Naive thymus-derived CD4-positive, alpha-beta T cell (primary cell): ENCODE measurements at regions of chr17 and their contacts with region 1.

Region 1: DNA sequence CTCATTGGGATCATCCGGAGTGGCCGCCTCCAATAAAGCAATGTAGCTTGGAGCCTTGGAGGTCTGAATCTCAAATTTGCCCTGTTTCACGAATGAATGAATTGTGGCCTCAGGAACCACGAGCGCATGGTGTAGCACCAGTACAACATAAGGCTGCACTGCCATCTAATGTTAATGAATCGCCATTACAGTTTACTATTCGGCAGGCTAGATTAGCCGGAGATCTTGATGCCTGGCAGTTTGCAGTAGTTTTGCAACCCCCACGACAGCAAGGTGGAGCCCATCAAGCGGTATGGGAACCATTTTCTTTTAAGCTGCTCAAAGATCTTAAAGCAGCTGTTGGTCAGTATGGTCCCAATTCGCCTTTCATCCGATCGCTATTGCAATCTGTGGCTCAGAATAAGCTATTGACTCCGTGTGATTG is 18.8 kb downstream of the ALOX15B start:
- DNase-seq: peak in 7 of 9 donors; percentile 49 to 73 (median 64)
- ATAC-seq: peak; percentile 90
- H3K4me3 ChIP-seq: no peak overlapping the region
- H3K4me3 Mint-ChIP-seq: no peak overlapping the region
- H3K27ac ChIP-seq: no peak overlapping the region
- H3K27ac Mint-ChIP-seq: no peak overlapping the region
- H3K4me1 ChIP-seq: no peaks in the 10 kb centered on the region
- H3K4me1 Mint-ChIP-seq: peaks cover 0 to 20% (median 6%) of the 10 kb centered on the region in 7 donors
- H3K27me3 ChIP-seq: peaks cover 0 to 4% of the 10 kb centered on the region in 2 donors
- H3K27me3 Mint-ChIP-seq: peaks cover 34 to 62% (median 44%) of the 10 kb centered on the region in 5 donors

Region 2: DNA sequence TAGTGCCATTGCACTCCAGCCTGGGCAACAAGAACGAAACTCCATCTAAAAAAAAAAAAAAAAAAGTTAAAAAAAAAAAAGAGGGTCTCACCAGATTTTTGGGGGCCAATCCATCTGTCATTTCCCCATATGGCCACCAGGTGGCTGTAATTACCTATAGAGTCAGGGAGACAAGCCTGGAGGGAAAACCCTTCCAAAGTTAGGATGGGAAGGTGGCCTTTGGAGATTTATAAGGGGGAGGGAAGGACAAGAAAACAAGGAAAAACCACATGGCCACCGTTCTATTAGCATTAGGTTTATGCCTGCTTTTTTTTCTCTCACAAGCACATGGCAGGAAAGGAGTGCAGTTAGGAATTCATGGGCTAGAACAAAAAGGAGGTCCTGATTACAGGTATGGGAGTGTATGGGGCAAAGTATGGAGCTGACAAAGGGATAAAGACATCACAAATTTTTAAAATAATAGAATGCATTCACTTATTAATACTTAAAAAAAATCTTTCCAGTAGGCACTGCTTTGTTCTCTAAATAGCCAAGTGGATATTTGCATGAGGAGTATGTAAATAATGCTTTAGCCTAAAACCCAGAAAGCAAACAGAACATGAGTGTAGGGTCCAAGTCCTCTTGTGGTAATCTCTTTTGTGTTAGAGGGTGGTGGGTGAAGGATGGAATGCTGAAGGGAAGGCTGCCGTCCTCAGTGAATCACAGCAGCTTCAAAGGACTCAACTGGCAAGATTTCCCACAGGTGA is 194.8 kb before region 1 on chr17:
- CTCF ChIA-PET with region 1: interaction called, 4 read pairs
- POLR2A ChIA-PET with region 1: no interaction called
- intact Hi-C with region 1: loop called in 1 of 2 experiments (anchors 5 kb)
- DNase-seq: peak in 3 of 9 donors; percentile 48 to 53 (median 49)
- ATAC-seq: no peak
- H3K4me3 ChIP-seq: no peak overlapping the region
- H3K4me3 Mint-ChIP-seq: no peak overlapping the region
- H3K27ac ChIP-seq: no peak overlapping the region
- H3K27ac Mint-ChIP-seq: peak overlapping the region in 1 of 9 donors; percentile 60
- H3K4me1 ChIP-seq: peaks cover 17 to 19% of the 10 kb centered on the region in 2 donors
- H3K4me1 Mint-ChIP-seq: peaks cover 16 to 32% (median 27%) of the 10 kb centered on the region in 7 donors
- H3K27me3 ChIP-seq: no peaks in the 10 kb centered on the region
- H3K27me3 Mint-ChIP-seq: no peaks in the 10 kb centered on the region

Region 3: DNA sequence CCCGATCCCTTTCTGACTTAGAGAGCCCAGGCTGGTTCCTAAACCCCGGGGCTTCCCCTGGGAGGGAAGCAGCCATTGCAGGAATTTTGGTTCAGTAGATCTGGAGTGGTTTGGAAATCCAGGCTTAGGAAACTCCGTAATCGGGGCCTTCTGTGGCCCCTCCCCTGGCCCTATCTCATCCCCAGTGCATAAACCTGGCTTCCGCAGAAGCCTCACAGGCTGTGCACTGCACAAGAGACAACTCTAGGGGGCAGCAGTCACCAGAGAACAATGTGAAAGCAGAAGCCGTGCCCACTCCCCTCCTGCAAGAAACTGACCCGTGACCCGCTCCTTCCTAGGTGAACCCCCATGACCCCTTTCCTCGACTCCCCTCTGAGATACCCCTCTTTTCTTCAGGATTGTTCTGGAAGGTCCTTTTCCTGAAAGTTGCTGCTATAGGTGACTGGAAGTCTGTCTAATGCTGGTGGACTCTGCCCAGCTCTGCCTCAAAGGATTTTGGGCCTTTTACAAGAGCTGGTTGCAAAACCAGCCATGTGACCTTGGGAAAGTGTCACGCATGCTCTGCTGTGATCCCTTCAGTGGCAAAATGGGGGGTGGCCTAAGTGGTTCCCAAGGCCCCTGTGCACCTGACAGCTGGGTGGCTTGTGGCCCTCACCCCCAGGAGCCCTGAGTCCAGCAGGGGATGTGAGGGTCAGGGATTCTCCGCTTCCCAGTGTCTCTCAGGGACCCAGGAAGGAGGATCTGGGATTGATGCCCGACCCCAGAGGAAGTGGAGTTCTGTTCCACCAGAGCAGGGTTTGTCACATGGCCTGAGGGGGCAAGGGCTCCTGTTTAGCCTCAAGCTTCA is 40.8 kb before region 1 on chr17:
- CTCF ChIA-PET with region 1: no interaction called
- POLR2A ChIA-PET with region 1: no interaction called
- intact Hi-C with region 1: loop called in 1 of 2 experiments (anchors 2 kb)
- DNase-seq: peak in 8 of 9 donors; percentile 19 to 56 (median 43)
- ATAC-seq: peak; percentile 88
- H3K4me3 ChIP-seq: peak overlapping the region; percentile 59
- H3K4me3 Mint-ChIP-seq: peak overlapping the region; percentile 74 to 88 (median 82)
- H3K27ac ChIP-seq: no peak overlapping the region
- H3K27ac Mint-ChIP-seq: peak overlapping the region in 2 of 9 donors; percentile 28 to 41
- H3K4me1 ChIP-seq: peaks cover 0 to 3% of the 10 kb centered on the region in 2 donors
- H3K4me1 Mint-ChIP-seq: peaks cover 0 to 21% (median 7%) of the 10 kb centered on the region in 7 donors
- H3K27me3 ChIP-seq: no peaks in the 10 kb centered on the region
- H3K27me3 Mint-ChIP-seq: peaks cover 0 to 38% (median 4%) of the 10 kb centered on the region in 5 donors

Region 4: DNA sequence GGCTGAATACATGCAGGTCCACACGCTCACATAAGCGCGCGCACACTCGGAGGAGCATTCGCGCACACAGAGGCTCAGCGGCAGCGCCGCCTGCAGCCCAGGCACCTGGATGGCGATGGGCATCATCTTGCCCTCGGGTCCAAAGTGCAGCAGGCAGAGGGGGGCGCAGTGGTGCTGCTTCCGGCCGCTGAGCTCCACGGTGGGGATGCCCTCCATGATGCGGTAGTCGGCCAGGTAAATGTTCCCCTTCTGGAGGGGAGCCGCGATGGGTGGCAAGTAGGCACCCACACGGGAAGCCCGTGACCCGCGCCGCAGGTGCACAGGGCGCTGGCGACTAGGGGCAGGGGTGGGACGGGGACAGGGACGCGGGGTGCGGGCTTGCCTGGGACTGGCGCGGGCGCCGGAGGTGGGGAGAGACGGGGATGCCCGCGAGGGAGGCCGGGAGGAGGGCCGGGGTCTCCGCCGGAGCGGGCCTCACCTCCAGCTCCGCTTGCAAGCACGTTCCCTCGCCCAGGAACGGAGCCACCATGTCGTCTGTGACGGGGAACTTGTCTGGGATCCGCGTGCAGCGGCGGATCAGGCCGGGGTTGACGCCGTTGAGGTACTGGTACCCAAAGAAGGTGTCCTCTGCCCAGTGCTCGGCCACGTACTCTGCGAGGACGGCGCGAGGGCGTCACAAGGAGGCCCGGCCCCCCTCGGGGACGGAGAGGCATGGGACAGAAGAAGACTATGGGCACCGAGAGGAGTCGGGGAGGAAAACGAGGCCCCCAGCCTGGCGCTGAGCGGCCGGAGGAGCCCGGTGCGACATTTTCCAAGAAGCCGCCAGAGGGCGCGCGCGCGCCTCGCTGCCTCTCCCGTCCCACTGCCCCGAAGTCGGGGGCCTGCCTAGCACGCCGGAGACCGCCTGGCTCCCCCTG is 21.8 kb after region 1 on chr17:
- CTCF ChIA-PET with region 1: interaction called, 122 read pairs
- POLR2A ChIA-PET with region 1: interaction called, 4 read pairs
- intact Hi-C with region 1: loop called in 1 of 2 experiments (anchors 1 kb)
- DNase-seq: peak; percentile 63 to 89 (median 79)
- ATAC-seq: peak; percentile 90
- H3K4me3 ChIP-seq: peak overlapping the region; percentile 62
- H3K4me3 Mint-ChIP-seq: peak overlapping the region; percentile 88 to 93 (median 91)
- H3K27ac ChIP-seq: peak overlapping the region; percentile 62
- H3K27ac Mint-ChIP-seq: peak overlapping the region; percentile 42 to 92 (median 79)
- H3K4me1 ChIP-seq: peaks cover 13 to 14% of the 10 kb centered on the region in 2 donors
- H3K4me1 Mint-ChIP-seq: peaks cover 10 to 21% (median 18%) of the 10 kb centered on the region in 7 donors
- H3K27me3 ChIP-seq: peaks cover 0 to 4% of the 10 kb centered on the region in 2 donors
- H3K27me3 Mint-ChIP-seq: peaks cover 7 to 18% (median 9%) of the 10 kb centered on the region in 5 donors

Region 5: DNA sequence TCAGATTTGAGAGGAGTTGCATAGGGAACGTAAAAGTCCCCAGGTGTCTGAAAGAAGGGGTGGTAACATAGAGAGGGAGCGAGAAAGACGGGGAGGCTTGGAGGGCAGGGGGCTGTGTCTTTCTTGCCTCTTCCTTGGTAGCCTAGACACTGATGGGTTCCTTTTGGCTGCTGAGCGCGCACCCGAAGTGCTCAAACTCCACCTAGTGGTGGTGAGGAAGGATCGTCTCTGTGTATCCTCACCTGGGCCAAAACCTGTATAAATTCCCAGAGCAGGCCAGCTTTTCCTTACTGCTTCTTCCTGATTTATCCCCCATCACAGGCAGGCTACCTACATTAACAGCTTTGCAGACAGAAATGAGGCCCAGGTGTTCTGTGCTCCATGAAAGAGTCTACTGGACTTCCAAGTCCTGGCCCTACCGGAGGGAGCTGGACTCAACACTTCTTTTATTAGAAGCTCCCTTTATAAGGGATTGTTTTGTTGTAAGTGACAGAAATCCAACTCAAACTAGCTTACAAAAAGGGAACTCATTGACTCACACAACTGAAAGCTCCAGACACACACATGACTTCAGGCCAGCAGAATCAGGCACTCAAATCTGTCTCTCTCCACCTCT is 243.0 kb after region 1 on chr17:
- CTCF ChIA-PET with region 1: interaction called, 18 read pairs
- POLR2A ChIA-PET with region 1: no interaction called
- intact Hi-C with region 1: loop called in 1 of 2 experiments (anchors 1 kb)
- DNase-seq: peak; percentile 33 to 80 (median 72)
- ATAC-seq: peak; percentile 95
- H3K4me3 ChIP-seq: no peak overlapping the region
- H3K4me3 Mint-ChIP-seq: peak overlapping the region in 1 of 10 donors; percentile 14
- H3K27ac ChIP-seq: no peak overlapping the region
- H3K27ac Mint-ChIP-seq: peak overlapping the region in 7 of 9 donors; percentile 6 to 80 (median 71)
- H3K4me1 ChIP-seq: peaks cover 3 to 9% of the 10 kb centered on the region in 2 donors
- H3K4me1 Mint-ChIP-seq: peaks cover 7 to 18% (median 14%) of the 10 kb centered on the region in 7 donors
- H3K27me3 ChIP-seq: no peaks in the 10 kb centered on the region
- H3K27me3 Mint-ChIP-seq: peaks cover 0 to 5% (median 0%) of the 10 kb centered on the region in 5 donors